T-cell (primary cell): ENCODE measurements at regions of chr2 and their contacts with region 1.

Region 1: DNA sequence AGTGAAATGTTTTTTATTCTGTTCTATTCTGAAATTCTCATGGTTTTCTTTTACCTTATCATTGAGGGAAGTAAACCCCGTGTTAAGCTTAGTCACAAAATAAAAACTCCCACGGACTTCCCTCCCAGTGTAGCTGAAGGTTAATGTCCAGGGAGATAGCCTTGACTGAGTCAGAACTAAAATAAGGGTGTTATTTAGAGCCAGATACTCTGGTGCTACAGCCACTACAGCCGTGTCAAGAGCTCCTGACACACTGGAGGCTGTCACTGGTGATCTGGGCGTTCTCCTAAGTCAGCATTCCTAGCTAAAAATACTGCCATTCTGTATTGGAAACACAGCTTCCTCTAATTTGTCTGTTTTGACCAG is 82.0 kb upstream of the RANBP2 start:
- DNase-seq: no peak
- ATAC-seq: no peak
- H3K4me3 ChIP-seq: no peak overlapping the region
- H3K4me3 Mint-ChIP-seq: no peak overlapping the region
- H3K27ac ChIP-seq: no peak overlapping the region
- H3K27ac Mint-ChIP-seq: no peak overlapping the region
- H3K4me1 ChIP-seq: peaks cover 0 to 20% of the 10 kb centered on the region in 2 experiments
- H3K4me1 Mint-ChIP-seq: peaks cover 40 to 66% (median 60%) of the 10 kb centered on the region in 3 donors
- H3K27me3 ChIP-seq: no peaks in the 10 kb centered on the region
- H3K27me3 Mint-ChIP-seq: no peaks in the 10 kb centered on the region

Region 2: GRCh38 chr2:108594132-108594981 is 42.9 kb before region 1 on chr2:
- CTCF ChIA-PET with region 1: interaction called, 10 to 14 read pairs
- POLR2A ChIA-PET with region 1: no interaction called
- DNase-seq: no peak
- ATAC-seq: no peak
- H3K4me3 ChIP-seq: no peak overlapping the region
- H3K4me3 Mint-ChIP-seq: no peak overlapping the region
- H3K27ac ChIP-seq: no peak overlapping the region
- H3K27ac Mint-ChIP-seq: no peak overlapping the region
- H3K4me1 ChIP-seq: no peaks in the 10 kb centered on the region
- H3K4me1 Mint-ChIP-seq: peaks cover 31 to 34% (median 31%) of the 10 kb centered on the region in 3 donors
- H3K27me3 ChIP-seq: no peaks in the 10 kb centered on the region
- H3K27me3 Mint-ChIP-seq: no peaks in the 10 kb centered on the region

Region 3: GRCh38 chr2:108607706-108608301 is 29.5 kb before region 1 on chr2:
- CTCF ChIA-PET with region 1: interaction called, 28 to 55 read pairs
- POLR2A ChIA-PET with region 1: interaction called in 1 of 2 experiments, 4 read pairs
- DNase-seq: peak in 33 of 35 experiments; percentile 22 to 73 (median 44)
- ATAC-seq: peak in 2 of 4 experiments; percentile 41 to 48
- H3K4me3 ChIP-seq: no peak overlapping the region
- H3K4me3 Mint-ChIP-seq: no peak overlapping the region
- H3K27ac ChIP-seq: no peak overlapping the region
- H3K27ac Mint-ChIP-seq: no peak overlapping the region
- H3K4me1 ChIP-seq: peaks cover 0 to 35% of the 10 kb centered on the region in 2 experiments
- H3K4me1 Mint-ChIP-seq: peaks cover 35 to 44% (median 39%) of the 10 kb centered on the region in 3 donors
- H3K27me3 ChIP-seq: no peaks in the 10 kb centered on the region
- H3K27me3 Mint-ChIP-seq: no peaks in the 10 kb centered on the region

Region 4: GRCh38 chr2:108615480-108616090 is 21.7 kb before region 1 on chr2:
- CTCF ChIA-PET with region 1: interaction called, 28 to 29 read pairs
- POLR2A ChIA-PET with region 1: interaction called, 6 to 8 read pairs
- DNase-seq: peak in 1 of 35 experiments; percentile 55
- ATAC-seq: no peak
- H3K4me3 ChIP-seq: no peak overlapping the region
- H3K4me3 Mint-ChIP-seq: peak overlapping the region in 2 of 3 donors; percentile 14 to 32
- H3K27ac ChIP-seq: peak overlapping the region; percentile 94
- H3K27ac Mint-ChIP-seq: peak overlapping the region; percentile 64 to 93
- H3K4me1 ChIP-seq: peaks cover 35 to 76% of the 10 kb centered on the region in 2 experiments
- H3K4me1 Mint-ChIP-seq: peaks cover 81 to 93% (median 93%) of the 10 kb centered on the region in 3 donors
- H3K27me3 ChIP-seq: no peaks in the 10 kb centered on the region
- H3K27me3 Mint-ChIP-seq: no peaks in the 10 kb centered on the region

Region 5: DNA sequence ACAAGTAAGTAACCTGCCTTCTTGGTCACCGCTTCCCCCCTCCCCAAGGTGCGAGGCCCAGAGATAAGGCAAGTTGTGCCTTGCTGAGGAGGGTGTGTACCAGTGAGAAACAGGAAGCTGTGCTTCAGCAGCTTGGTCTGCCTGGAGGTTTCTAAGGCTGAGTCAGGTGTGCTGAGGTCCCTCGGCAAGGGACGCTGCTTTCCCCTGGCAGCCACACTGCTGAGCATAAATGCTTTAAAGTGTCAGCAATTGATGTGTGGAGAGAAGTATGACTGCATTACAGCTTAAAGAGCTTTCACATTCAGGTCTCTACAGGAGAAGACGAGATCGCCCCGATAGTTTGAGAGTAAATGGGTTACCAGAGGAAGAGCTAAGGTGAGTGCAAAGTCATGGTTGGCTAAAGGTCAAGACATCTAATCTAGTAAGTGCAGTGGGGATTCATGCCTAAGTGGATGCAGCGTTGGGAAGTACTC is 16.2 kb before region 1 on chr2:
- CTCF ChIA-PET with region 1: interaction called, 16 to 17 read pairs
- POLR2A ChIA-PET with region 1: interaction called, 6 to 8 read pairs
- DNase-seq: peak; percentile 53 to 85 (median 73)
- ATAC-seq: peak; percentile 93 to 99 (median 98)
- H3K4me3 ChIP-seq: peak overlapping the region; percentile 68 to 74
- H3K4me3 Mint-ChIP-seq: peak overlapping the region; percentile 82 to 88 (median 84)
- H3K27ac ChIP-seq: peak overlapping the region; percentile 94
- H3K27ac Mint-ChIP-seq: peak overlapping the region; percentile 94
- H3K4me1 ChIP-seq: peaks cover 45 to 62% of the 10 kb centered on the region in 2 experiments
- H3K4me1 Mint-ChIP-seq: peaks cover 76 to 89% (median 85%) of the 10 kb centered on the region in 3 donors
- H3K27me3 ChIP-seq: no peaks in the 10 kb centered on the region
- H3K27me3 Mint-ChIP-seq: no peaks in the 10 kb centered on the region

Region 6: GRCh38 chr2:108626995-108627394 is 10.3 kb before region 1 on chr2:
- CTCF ChIA-PET with region 1: interaction called, 14 to 16 read pairs
- POLR2A ChIA-PET with region 1: no interaction called
- DNase-seq: no peak
- ATAC-seq: no peak
- H3K4me3 ChIP-seq: no peak overlapping the region
- H3K4me3 Mint-ChIP-seq: peak overlapping the region in 1 of 3 donors; percentile 21
- H3K27ac ChIP-seq: peak overlapping the region; percentile 59
- H3K27ac Mint-ChIP-seq: no peak overlapping the region
- H3K4me1 ChIP-seq: peaks cover 24 to 38% of the 10 kb centered on the region in 2 experiments
- H3K4me1 Mint-ChIP-seq: peaks cover 69 to 77% (median 76%) of the 10 kb centered on the region in 3 donors
- H3K27me3 ChIP-seq: no peaks in the 10 kb centered on the region
- H3K27me3 Mint-ChIP-seq: no peaks in the 10 kb centered on the region